ENCODE measurements at regions of chr5 and their contacts with region 1.

Region 1: GRCh38 chr5:32585446-32586275 is at the start of gene SUB1:
- DNase-seq: peak; percentile 91 to 99 (median 94)

Region 2: GRCh38 chr5:32174011-32174870 is 411.4 kb before region 1 on chr5 and contains the start of gene GOLPH3:
- intact Hi-C with region 1: loop called (anchors 10 kb)
- DNase-seq: peak; percentile 86 to 98 (median 90)

Region 3: DNA sequence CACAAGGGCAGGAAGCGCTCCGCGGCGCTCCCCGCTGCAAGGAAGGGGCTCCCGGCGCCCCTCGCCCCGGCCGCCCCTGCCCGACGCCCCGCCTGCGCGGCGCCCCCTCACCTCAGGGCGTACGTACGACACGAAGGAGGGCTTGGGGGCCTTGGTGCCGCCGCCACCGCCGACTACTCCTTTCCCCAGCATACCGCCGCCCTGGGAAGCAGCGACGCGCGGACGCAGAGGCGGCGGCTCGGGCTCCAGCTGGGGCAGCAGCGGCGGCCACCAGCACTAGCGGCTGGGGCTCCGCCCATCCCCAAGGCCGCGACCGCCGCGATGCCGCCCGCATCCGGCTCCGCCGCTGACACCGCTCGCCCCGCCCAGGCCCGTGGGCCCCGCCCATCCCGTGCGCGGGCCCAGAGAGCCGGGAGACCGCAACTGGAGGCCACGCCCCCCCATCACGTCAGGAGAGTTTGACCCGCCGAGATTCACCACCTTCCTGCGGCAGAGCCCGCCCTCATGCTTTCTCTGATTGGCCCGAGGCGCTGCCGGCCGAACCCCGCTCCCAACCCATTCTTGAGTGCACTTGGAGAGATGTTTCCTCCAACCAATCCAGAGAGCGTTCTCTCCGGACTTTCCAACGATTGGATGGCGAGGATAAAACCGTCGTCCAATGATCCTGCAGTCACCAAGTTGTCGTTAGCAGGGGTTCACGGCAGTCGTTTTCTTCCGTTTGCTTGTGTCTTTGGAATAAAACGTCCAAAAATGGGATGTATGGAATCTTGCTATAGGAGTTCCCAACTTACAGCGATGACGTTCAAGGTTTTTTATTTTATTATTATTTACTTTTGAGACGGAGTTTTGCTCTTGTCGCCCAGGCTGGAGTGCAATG is 272.8 kb before region 1 on chr5 and contains the start of gene MTMR12:
- intact Hi-C with region 1: loop called (anchors 10 kb)
- DNase-seq: peak; percentile 99 to 100 (median 99)

Region 4: DNA sequence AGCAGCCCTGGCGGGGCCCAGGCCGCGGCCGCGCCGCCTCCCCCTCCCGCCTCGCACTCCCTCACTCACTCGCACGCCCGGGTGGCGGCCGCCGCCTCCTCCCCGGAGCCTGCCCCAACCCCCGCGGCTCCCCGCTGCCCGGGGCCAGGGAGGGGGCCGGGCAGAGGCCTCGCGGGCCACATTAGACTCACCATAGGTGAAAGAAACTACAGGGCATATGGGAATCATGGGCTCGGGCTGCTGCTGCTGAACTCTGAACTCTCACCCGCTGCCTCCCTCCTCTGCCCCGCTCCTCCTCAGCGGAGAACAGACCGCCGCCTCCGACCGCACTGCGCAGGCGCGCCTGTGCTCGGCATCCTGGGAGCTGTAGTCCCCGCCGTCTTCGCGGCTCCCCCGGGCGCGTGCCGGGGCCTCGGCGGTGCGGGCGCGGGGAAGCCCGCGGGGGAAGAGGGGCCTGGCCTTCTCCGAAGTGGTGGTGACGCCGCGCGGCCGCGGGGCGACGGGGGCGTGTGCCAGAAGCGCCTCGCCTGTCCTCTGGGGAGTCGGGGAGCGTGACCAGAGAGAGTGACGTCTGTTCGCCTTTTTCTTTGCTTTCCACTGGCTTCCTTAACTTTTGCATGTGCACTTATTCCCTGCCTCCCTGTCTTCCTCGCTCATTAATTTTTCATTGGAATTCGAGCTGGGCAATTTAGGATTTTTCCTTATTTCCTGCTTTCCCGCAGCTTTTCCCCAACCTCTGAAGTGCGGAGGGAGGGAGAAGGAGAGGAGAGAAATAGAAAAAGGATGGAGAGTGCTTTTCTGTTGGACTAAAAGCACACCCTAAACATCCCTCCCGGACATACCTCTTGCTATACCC is 141.0 kb before region 1 on chr5 and contains the start of gene ZFR:
- intact Hi-C with region 1: loop called (anchors 2 kb)
- DNase-seq: peak; percentile 88 to 99 (median 92)

Region 5: DNA sequence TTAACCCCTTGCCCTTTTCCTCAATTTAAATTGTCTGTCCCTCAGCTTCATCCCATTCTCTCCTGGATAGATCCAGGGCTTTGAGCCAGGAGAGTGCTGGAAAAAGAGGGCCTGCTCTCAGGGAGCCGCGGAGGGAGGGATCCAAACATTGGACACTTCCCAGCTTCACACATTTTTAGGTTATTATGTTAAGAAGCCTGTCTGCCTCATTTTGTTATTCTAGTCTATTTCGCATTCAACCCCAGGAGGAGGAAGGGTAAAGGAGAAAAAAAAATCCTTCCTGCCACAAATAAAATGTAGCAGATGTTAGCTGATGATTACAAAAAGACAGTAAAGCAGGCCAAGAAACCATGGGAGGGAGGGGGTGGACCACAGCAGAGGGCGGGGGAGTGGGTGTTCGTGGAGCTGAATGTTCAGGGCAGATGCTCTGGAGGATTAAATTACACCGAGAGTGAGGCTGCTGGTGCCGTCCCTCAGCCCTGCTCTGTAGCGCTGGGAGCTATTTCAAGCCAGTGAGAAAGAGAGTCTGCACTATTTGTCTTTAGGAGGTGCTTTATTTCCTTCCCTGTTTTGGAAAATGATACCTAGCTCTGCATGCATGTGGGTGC is 80.6 kb before region 1 on chr5:
- intact Hi-C with region 1: loop called (anchors 2 kb)
- DNase-seq: peak; percentile 30 to 94 (median 68)

Region 6: DNA sequence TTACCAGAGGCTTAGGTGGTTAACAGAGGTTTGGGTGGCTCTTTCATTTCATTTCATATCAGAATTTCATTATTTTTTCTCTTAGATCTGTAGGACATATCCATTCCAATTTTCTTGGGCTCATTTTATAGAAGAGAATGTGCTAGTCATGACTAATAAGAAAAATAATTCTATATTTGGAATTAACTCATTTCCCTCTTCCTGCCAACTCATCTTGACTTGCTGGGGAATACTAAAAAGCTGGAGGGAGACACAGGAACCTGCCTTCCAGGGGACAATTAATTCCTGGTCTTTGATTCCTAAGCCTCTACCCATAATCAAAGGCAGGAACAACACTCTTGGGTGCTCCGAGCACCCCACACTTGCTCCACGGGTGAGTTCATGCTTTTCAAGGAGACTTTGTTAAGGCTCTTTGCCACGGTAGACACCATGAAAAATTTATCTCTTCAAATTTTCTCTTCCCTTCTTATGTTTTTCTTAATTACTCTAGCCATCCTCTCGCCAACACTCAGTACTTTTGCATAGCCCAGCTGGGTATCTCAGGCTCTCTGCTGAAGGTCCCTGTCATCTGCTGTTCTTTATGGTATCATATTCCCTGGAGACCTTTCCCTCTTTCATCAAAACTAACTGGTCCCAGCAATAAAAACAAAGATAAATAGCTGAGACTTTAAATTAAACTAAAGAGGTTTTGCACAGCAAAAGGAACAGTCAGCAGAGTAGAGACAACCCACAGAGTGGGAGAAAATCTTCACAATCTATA is 399.4 kb after region 1 on chr5:
- intact Hi-C with region 1: no loop called
- DNase-seq: no peak

Measured in posterior cingulate gyrus (tissue), 11 donors.